Ovary (tissue), 10 donors: ENCODE measurements at regions of chr11 and their contacts with region 1.

Region 1: GRCh38 chr11:81070948-81071347 is 1630.1 kb upstream of the TENM4 start:
- DNase-seq: no peak
- H3K4me3 ChIP-seq: no peak overlapping the region
- H3K27ac ChIP-seq: no peak overlapping the region
- H3K4me1 ChIP-seq: no peaks in the 10 kb centered on the region
- H3K27me3 ChIP-seq: no peaks in the 10 kb centered on the region
- CTCF ChIP-seq: no peak
- EP300 ChIP-seq: no peak
- POLR2A ChIP-seq: no peak

Region 2: GRCh38 chr11:80970037-80970436 is 100.9 kb before region 1 on chr11:
- intact Hi-C with region 1: no loop called
- DNase-seq: no peak
- H3K4me3 ChIP-seq: no peak overlapping the region
- H3K27ac ChIP-seq: no peak overlapping the region
- H3K4me1 ChIP-seq: peaks cover 2% of the 10 kb centered on the region
- H3K27me3 ChIP-seq: no peaks in the 10 kb centered on the region
- CTCF ChIP-seq: no peak
- EP300 ChIP-seq: no peak
- POLR2A ChIP-seq: no peak

Region 3: DNA sequence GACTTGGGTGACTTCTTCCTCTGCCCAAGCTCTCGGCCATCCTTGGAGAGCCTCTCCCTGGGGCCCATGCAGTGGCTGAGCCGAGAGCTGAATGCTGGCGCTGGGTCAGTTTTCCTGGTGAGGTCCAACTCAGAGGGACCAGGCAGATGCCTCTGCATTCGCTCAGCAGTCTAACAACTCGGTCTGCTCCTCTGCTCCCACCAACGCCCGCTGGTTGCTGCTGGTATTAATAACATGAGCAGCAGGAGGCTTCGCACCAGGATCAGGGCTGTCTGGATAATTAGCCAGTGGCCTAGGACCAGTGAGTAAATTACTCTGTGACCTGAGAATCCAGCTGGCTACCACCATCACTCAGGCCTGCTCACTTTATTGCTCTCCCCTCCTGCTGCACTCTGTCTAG is 1740.4 kb after region 1 on chr11:
- intact Hi-C with region 1: loop called in 1 of 4 experiments (anchors 5 kb)
- DNase-seq: no peak
- H3K4me3 ChIP-seq: no peak overlapping the region
- H3K27ac ChIP-seq: no peak overlapping the region
- H3K4me1 ChIP-seq: no peaks in the 10 kb centered on the region
- H3K27me3 ChIP-seq: no peaks in the 10 kb centered on the region
- CTCF ChIP-seq: no peak
- EP300 ChIP-seq: no peak
- POLR2A ChIP-seq: no peak